Calu3 (cell line): ENCODE measurements at regions of chr11 and their contacts with region 1.

Region 1: DNA sequence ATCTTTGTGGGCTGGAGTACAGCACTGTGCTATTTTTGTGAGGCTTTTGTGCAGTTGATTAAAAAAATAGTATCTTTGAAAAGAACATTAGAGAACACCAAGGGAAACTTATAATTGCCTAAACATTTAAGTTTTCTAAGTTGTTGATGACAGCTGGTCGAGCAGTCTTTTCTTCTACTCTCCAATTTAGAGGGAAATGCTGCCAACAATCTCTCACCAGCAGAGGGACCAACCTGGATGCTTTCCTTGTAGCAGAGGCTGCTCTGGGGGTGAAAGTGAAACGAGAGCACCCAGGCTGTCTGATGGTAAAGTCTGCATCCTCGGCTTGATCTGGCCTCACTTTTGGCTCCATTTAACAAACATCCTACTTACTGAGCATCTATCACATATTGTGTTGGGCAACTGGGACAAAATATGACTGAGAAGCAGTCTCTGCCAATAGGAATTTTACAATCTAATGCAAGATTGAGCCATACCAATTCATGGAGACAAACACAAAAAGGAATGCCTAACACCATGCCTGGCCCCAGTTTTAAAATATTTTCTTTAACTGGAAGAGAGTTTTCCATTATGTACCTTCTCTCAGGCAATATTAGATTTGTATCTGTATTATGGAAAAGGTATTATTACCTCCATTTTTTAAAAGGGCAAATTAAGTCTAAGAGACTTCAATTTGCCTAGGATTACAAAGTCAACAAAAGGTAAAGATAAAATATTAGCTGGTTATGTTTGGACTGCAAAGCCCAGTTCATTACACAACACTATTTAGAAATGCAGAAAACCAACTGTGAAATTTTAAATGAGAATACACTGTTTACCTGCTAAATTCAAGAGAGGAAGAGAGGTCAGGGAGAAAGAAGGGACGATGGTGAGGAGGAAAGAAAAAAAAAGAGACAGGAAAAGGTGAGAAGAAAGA is 1286.7 kb upstream of the TENM4 start:
- DNase-seq: peak; percentile 24
- H3K4me3 Mint-ChIP-seq: no peak overlapping the region
- H3K27ac Mint-ChIP-seq: no peak overlapping the region
- H3K4me1 Mint-ChIP-seq: no peaks in the 10 kb centered on the region
- H3K27me3 Mint-ChIP-seq: no peaks in the 10 kb centered on the region
- CTCF ChIP-seq: peak; percentile 20

Region 2: GRCh38 chr11:80383655-80384054 is 343.9 kb before region 1 on chr11:
- CTCF ChIA-PET with region 1: no interaction called
- intact Hi-C with region 1: no loop called
- DNase-seq: peak; percentile 4
- H3K4me3 Mint-ChIP-seq: no peak overlapping the region
- H3K27ac Mint-ChIP-seq: peak overlapping the region; percentile 34
- H3K4me1 Mint-ChIP-seq: peaks cover 6% of the 10 kb centered on the region
- H3K27me3 Mint-ChIP-seq: no peaks in the 10 kb centered on the region
- CTCF ChIP-seq: no peak

Region 3: DNA sequence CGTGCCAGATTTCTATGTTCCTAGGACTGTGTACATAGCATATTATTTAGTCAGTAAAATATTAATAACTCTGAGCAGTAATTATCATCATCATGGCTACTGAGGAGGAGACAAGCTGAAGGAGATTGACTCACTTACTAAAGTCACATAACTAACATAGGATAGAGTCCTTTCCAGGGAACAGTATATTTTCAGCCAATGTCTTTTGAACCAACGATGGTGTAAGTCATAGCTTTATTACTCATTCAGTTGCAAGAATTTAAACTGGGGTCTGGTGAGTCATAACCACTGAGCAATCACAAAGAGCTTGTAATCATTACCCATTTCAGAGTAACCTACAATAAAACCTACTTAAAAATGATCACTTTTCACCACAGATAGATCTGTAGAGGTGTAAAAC is 278.0 kb after region 1 on chr11:
- CTCF ChIA-PET with region 1: no interaction called
- intact Hi-C with region 1: loop called (anchors 5 kb)
- DNase-seq: no peak
- H3K4me3 Mint-ChIP-seq: no peak overlapping the region
- H3K27ac Mint-ChIP-seq: no peak overlapping the region
- H3K4me1 Mint-ChIP-seq: no peaks in the 10 kb centered on the region
- H3K27me3 Mint-ChIP-seq: no peaks in the 10 kb centered on the region
- CTCF ChIP-seq: no peak

Region 4: DNA sequence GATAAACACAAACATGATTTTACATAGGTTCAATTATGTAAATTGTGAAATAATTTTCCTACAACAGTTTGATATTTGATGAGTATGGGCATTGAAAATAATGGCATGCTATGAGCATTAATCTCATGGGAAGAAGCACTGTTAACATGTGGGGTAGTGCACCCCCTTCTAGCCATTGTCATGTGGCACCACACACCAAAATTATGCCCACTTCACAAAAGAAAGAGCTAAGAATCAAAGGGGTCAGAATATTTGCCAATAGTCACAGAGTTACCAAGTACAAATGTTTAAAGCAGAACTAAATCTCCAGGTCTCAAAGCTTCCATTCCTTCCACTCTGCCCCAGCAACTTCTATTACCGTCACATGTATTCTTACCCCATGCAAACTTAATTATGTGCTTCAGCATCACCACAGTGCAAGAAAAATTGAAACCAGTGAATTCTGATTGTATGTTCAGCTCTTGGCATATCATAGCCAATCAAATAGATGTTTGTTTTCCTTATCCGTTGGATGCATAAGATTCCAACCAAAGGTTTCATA is 732.3 kb after region 1 on chr11:
- CTCF ChIA-PET with region 1: no interaction called
- intact Hi-C with region 1: no loop called
- DNase-seq: no peak
- H3K4me3 Mint-ChIP-seq: no peak overlapping the region
- H3K27ac Mint-ChIP-seq: no peak overlapping the region
- H3K4me1 Mint-ChIP-seq: no peaks in the 10 kb centered on the region
- H3K27me3 Mint-ChIP-seq: no peaks in the 10 kb centered on the region
- CTCF ChIP-seq: no peak